ENCODE measurements at regions of chr11 and their contacts with region 1.

Region 1: DNA sequence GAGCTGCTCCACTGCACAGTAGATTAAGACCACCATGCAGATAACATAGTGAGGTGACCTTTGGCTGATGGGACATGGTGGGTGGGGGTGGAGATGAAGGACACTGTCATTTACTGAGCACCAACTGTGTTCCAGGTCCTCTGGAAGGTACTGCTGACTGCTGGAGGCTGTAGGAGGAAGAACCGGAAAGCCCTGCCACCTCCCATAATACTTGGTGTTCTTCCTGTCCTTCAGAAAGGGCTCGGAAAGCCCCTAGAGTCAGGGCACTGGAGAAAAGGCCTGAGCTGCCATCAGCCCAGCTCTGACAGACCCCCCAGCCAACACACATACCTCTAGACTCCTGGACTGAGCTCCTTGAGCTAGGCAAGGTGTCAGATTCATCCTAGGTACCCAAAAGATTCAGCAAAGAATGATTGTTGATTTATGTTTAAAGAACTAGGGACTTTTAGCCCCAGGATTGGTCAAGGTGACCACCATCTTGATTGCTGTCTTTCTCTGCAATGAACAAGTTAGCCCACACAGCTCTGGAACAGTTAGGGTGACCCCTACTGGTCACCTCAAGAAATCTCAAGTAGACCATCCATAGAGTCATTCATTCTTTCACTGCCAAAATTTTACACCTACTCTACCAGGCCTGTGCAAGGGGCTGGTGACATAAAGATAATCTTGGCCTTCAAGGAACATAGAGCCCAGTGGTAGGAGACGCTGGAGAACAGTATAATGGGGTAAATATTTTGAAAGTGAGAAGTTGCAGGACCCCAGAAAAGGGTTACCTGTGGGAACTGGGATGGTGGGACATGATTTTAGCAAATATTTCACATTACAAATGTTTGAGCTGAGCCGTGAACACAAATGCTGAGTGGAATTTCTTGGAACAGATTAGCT is 39.4 kb downstream of the IRAG1 start:
- DNase-seq: peak; percentile 16
- H3K4me3 Mint-ChIP-seq: no peak overlapping the region
- H3K27ac Mint-ChIP-seq: no peak overlapping the region
- H3K4me1 Mint-ChIP-seq: peaks cover 33% of the 10 kb centered on the region
- H3K27me3 Mint-ChIP-seq: peaks cover 2% of the 10 kb centered on the region

Region 2: DNA sequence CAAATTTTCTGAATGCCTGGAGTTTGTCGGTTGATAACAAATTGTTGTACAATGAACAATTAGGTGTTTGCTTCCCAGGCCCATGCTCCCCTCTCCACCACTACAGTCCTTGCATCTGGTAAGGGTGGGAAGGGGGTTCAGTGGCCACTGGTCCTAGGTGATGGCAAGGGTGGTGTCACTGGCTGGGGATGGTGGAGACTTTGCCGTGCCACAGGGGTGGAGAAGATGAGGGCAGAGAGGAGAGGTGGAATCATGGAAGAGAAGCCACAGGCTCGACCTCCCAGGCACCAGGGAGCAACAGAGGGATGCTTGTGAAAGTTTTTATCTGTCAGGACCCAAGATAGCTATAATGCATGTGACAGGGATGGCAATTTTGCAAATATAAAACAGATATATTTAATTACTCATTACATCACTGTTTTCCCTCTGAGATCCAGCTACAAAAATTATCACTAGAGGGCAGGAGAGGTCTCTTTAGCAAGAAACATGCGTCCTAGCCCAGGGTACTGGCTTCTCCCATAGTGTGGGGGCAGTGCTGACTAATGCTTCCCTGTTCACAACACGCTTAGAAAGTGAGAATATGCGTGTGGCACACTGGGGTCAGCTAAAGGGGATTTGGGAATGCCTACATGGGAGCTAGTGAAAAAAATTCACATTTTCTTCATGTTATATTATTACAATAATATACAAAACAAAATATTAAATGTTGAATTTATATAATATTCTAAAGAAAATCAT is 248.1 kb before region 1 on chr11:
- intact Hi-C with region 1: loop called (anchors 1 kb)
- DNase-seq: peak; percentile 16
- H3K4me3 Mint-ChIP-seq: no peak overlapping the region
- H3K27ac Mint-ChIP-seq: no peak overlapping the region
- H3K4me1 Mint-ChIP-seq: peaks cover 25% of the 10 kb centered on the region
- H3K27me3 Mint-ChIP-seq: peaks cover 6% of the 10 kb centered on the region

Region 3: DNA sequence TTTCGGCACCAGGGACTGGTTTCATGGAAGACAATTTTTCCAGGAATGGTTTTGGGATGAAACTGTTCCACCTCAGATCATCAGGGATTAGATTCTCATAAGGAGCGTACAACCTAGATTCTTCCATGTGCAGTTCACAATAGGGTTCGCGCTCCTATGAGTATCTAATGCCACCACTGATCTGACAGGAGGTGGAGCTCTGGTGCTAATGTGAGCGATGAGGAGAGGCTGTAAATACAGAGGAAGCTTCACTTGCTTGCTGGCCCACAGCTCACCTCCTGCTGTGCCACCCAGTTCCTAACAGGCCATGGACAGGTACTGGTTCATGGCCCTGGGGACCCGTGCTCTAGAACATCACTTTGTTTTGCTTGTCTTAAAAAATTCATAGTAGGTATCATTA is 240.9 kb before region 1 on chr11:
- intact Hi-C with region 1: loop called (anchors 1 kb)
- DNase-seq: peak; percentile 22
- H3K4me3 Mint-ChIP-seq: no peak overlapping the region
- H3K27ac Mint-ChIP-seq: no peak overlapping the region
- H3K4me1 Mint-ChIP-seq: peaks cover 33% of the 10 kb centered on the region
- H3K27me3 Mint-ChIP-seq: peaks cover 11% of the 10 kb centered on the region

Region 4: GRCh38 chr11:10476927-10477689 is 177.1 kb before region 1 on chr11:
- intact Hi-C with region 1: no loop called
- DNase-seq: no peak
- H3K4me3 Mint-ChIP-seq: no peak overlapping the region
- H3K27ac Mint-ChIP-seq: no peak overlapping the region
- H3K4me1 Mint-ChIP-seq: peaks cover 14% of the 10 kb centered on the region
- H3K27me3 Mint-ChIP-seq: no peaks in the 10 kb centered on the region

Region 5: DNA sequence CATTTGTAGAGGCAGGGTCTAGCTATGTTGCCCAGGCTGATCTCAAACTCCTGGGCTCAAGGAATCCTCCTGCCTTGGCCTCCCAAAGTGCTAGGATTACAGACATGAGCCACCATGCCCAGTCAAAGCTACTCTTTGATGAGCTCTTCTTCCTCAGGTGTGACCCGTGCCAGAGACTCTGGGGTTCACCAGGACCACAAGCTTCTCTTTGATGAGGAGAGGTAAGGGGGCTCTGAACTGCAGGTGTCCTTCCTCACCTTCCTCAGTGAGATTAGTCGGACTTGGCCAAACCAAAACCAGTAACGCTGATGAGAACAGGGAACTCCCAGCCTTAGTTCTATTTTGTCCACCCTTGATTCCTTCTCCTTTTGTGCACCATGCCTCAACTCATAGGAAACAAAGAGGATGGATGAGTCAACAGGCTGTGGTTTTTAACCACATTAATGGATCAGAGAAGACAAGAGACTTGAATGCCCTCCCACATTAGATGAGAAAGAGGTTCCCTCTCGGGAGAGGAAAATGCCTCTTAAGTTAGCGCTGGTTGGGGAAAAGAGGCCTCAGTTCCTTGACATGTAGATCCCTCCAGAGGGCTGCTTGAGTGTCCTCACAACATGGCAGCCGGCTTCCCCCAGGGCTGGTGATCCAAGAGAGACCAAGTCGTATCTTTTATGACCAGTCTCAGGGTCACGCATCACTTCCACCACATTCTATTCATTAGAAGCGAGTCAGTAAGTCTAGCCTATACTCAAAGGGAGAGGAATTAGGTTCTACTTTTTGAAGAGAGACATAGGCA is 71.1 kb after region 1 on chr11:
- intact Hi-C with region 1: loop called (anchors 1 kb)
- DNase-seq: no peak
- H3K4me3 Mint-ChIP-seq: peak overlapping the region; percentile 47
- H3K27ac Mint-ChIP-seq: peak overlapping the region; percentile 61
- H3K4me1 Mint-ChIP-seq: peaks cover 24% of the 10 kb centered on the region
- H3K27me3 Mint-ChIP-seq: peaks cover 22% of the 10 kb centered on the region